Activated T-helper 2 cell treated with anti-CD3 and anti-CD28 coated beads, Interferon-gamma antibody, Interleukin-2, Interleukin-4, amounts not matched to agents 10 μg/mL and 5 μg/mL and 100 μg/mL, durations not matched to agents 14 hours and 24 hours and 36 hours (primary cell): ENCODE measurements at regions of chr9 and their contacts with region 1.

Region 1: GRCh38 chr9:8784838-8785237 is 985.3 kb upstream of the DMAC1 start:
- DNase-seq: no peak
- H3K4me3 Mint-ChIP-seq: no peak overlapping the region
- H3K27ac Mint-ChIP-seq: no peak overlapping the region
- H3K4me1 Mint-ChIP-seq: no peaks in the 10 kb centered on the region
- H3K27me3 Mint-ChIP-seq: no peaks in the 10 kb centered on the region

Region 2: DNA sequence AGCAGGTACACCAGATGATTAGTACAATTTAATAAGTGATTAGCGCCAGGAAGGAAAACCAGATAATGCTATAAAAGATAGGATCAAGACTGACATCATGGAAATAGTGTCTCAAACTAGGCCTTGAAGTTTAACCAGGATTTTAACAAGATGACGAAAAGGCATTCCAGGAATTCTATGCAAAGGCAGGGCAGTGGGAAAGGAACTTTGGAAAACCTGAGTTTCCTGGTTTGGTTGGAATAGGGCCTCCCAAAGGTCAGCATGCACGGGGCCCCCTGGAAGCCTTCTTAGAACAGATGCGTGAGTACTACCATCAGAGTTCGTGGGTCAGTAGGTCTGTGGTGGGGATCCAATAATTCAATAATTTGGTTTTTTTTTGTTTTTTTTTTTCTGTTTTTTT is 50.1 kb before region 1 on chr9:
- intact Hi-C with region 1: loop called (anchors 5 kb)
- DNase-seq: no peak
- H3K4me3 Mint-ChIP-seq: no peak overlapping the region
- H3K27ac Mint-ChIP-seq: no peak overlapping the region
- H3K4me1 Mint-ChIP-seq: no peaks in the 10 kb centered on the region
- H3K27me3 Mint-ChIP-seq: peaks cover 5% of the 10 kb centered on the region